Mammary epithelial cell (primary cell): ENCODE measurements at regions of chr11 and their contacts with region 1.

Region 1: GRCh38 chr11:72075109-72075508 is 5.2 kb downstream of the NUMA1 start:
- DNase-seq: no peak
- H3K4me3 ChIP-seq: no peak overlapping the region
- H3K27ac ChIP-seq: no peak overlapping the region
- H3K4me1 ChIP-seq: peaks cover 40% of the 10 kb centered on the region
- H3K27me3 ChIP-seq: no peaks in the 10 kb centered on the region
- CTCF ChIP-seq: peak in 1 of 2 donors; percentile 11

Region 2: GRCh38 chr11:72040726-72041441 is 34.2 kb before region 1 on chr11:
- CTCF ChIA-PET with region 1: no interaction called
- dilution Hi-C with region 1: no loop called
- in situ Hi-C with region 1: loop called in 1 of 2 experiments (anchors 5 kb)
- intact Hi-C with region 1: loop called (anchors 1 kb)
- DNase-seq: peak; percentile 83
- H3K4me3 ChIP-seq: peak overlapping the region; percentile 52 to 66 (median 57)
- H3K27ac ChIP-seq: peak overlapping the region; percentile 78
- H3K4me1 ChIP-seq: peaks cover 44% of the 10 kb centered on the region
- H3K27me3 ChIP-seq: no peaks in the 10 kb centered on the region
- CTCF ChIP-seq: no peak

Region 3: GRCh38 chr11:72569966-72570892 is 495.1 kb after region 1 on chr11:
- CTCF ChIA-PET with region 1: no interaction called
- dilution Hi-C with region 1: no loop called
- in situ Hi-C with region 1: no loop called
- intact Hi-C with region 1: no loop called
- DNase-seq: peak; percentile 84
- H3K4me3 ChIP-seq: no peak overlapping the region
- H3K27ac ChIP-seq: peak overlapping the region; percentile 43
- H3K4me1 ChIP-seq: peaks cover 29% of the 10 kb centered on the region
- H3K27me3 ChIP-seq: no peaks in the 10 kb centered on the region
- CTCF ChIP-seq: no peak